Naive thymus-derived CD4-positive, alpha-beta T cell (primary cell): ENCODE measurements at regions of chr6 and their contacts with region 1.

Region 1: GRCh38 chr6:36196880-36197548 is 470 bp downstream of the BRPF3 start:
- DNase-seq: peak; percentile 94 to 100 (median 98)
- ATAC-seq: peak; percentile 96
- H3K4me3 ChIP-seq: peak overlapping the region; percentile 81
- H3K4me3 Mint-ChIP-seq: peak overlapping the region; percentile 88 to 95 (median 92)
- H3K27ac ChIP-seq: peak overlapping the region; percentile 84
- H3K27ac Mint-ChIP-seq: peak overlapping the region; percentile 69 to 96 (median 92)
- H3K4me1 ChIP-seq: peaks cover 33 to 36% of the 10 kb centered on the region in 2 donors
- H3K4me1 Mint-ChIP-seq: peaks cover 19 to 59% (median 47%) of the 10 kb centered on the region in 7 donors
- H3K27me3 ChIP-seq: no peaks in the 10 kb centered on the region
- H3K27me3 Mint-ChIP-seq: peaks cover 0 to 3% (median 0%) of the 10 kb centered on the region in 5 donors

Region 2: GRCh38 chr6:36075656-36076055 is 121.4 kb before region 1 on chr6:
- CTCF ChIA-PET with region 1: no interaction called
- POLR2A ChIA-PET with region 1: no interaction called
- intact Hi-C with region 1: loop called in 1 of 2 experiments (anchors 1 kb)
- DNase-seq: peak in 5 of 9 donors; percentile 8 to 35 (median 22)
- ATAC-seq: peak; percentile 61
- H3K4me3 ChIP-seq: no peak overlapping the region
- H3K4me3 Mint-ChIP-seq: no peak overlapping the region
- H3K27ac ChIP-seq: no peak overlapping the region
- H3K27ac Mint-ChIP-seq: peak overlapping the region in 6 of 9 donors; percentile 6 to 69 (median 47)
- H3K4me1 ChIP-seq: no peaks in the 10 kb centered on the region
- H3K4me1 Mint-ChIP-seq: peaks cover 8 to 40% (median 28%) of the 10 kb centered on the region in 7 donors
- H3K27me3 ChIP-seq: no peaks in the 10 kb centered on the region
- H3K27me3 Mint-ChIP-seq: no peaks in the 10 kb centered on the region

Region 3: GRCh38 chr6:36123257-36124139 is 73.5 kb before region 1 on chr6:
- CTCF ChIA-PET with region 1: interaction called, 9 read pairs
- POLR2A ChIA-PET with region 1: interaction called, 15 read pairs
- intact Hi-C with region 1: loop called (anchors 1 kb)
- DNase-seq: peak; percentile 74 to 96 (median 89)
- ATAC-seq: peak; percentile 83
- H3K4me3 ChIP-seq: peak overlapping the region; percentile 11
- H3K4me3 Mint-ChIP-seq: peak overlapping the region; percentile 36 to 99 (median 60)
- H3K27ac ChIP-seq: peak overlapping the region; percentile 90
- H3K27ac Mint-ChIP-seq: peak overlapping the region; percentile 94 to 100 (median 99)
- H3K4me1 ChIP-seq: peaks cover 64 to 75% of the 10 kb centered on the region in 2 donors
- H3K4me1 Mint-ChIP-seq: peaks cover 63 to 98% (median 87%) of the 10 kb centered on the region in 7 donors
- H3K27me3 ChIP-seq: no peaks in the 10 kb centered on the region
- H3K27me3 Mint-ChIP-seq: no peaks in the 10 kb centered on the region

Region 4: DNA sequence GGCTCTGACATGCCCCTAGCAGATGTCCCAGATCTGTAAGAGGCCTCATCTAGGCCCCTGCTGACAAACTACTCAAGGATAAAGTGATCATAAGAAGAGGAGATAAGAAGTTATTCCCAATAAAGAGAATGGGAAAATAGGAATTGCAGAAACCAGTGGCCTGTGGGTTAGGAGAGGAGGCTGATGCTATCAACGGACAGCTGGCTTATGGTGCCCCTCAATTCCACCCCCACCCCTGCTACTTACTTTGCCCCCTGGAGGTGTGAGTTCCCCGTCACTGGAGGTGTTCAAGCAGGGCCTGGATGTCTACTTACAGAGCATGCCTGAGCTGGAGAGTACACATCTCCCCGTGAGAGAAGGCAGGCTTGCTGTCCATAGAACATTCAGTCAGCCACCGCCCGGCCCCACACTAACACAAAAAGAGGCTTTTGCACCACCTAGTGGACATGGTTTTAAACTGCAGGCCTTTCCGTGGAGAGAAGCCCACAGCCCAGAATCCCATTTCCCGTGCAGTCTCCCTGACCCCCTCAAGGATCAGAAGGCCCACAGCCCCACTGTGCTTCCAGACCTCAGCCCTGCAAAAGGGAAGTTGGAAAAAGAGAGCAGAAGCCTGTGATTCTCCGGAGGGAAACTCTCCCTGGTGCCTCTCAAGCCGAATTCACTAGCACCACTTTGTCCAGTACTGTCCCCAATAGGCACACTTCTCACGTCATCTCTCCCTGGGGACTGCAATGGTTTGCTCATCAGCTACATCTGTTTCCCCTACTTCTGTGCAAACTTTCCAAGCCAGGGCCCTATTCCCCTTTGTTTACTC is 163.4 kb after region 1 on chr6:
- CTCF ChIA-PET with region 1: no interaction called
- POLR2A ChIA-PET with region 1: no interaction called
- intact Hi-C with region 1: loop called in 1 of 2 experiments (anchors 1 kb)
- DNase-seq: peak; percentile 37 to 74 (median 66)
- ATAC-seq: peak; percentile 95
- H3K4me3 ChIP-seq: no peak overlapping the region
- H3K4me3 Mint-ChIP-seq: no peak overlapping the region
- H3K27ac ChIP-seq: no peak overlapping the region
- H3K27ac Mint-ChIP-seq: peak overlapping the region in 2 of 9 donors; percentile 24 to 55
- H3K4me1 ChIP-seq: peaks cover 4 to 6% of the 10 kb centered on the region in 2 donors
- H3K4me1 Mint-ChIP-seq: peaks cover 0 to 30% (median 4%) of the 10 kb centered on the region in 7 donors
- H3K27me3 ChIP-seq: no peaks in the 10 kb centered on the region
- H3K27me3 Mint-ChIP-seq: peaks cover 0 to 15% (median 4%) of the 10 kb centered on the region in 5 donors

Region 5: GRCh38 chr6:36985808-36986703 is 789.0 kb after region 1 on chr6 and contains the start of gene MTCH1:
- CTCF ChIA-PET with region 1: no interaction called
- POLR2A ChIA-PET with region 1: no interaction called
- intact Hi-C with region 1: loop called in 1 of 2 experiments (anchors 2 kb)
- DNase-seq: peak; percentile 85 to 98 (median 92)
- ATAC-seq: peak; percentile 93
- H3K4me3 ChIP-seq: peak within 1 kb of the TSS; percentile 98
- H3K4me3 Mint-ChIP-seq: peak within 1 kb of the TSS in 6 of 10 donors; percentile 98 to 100 (median 100)
- H3K27ac ChIP-seq: peak within 1 kb of the TSS; percentile 96
- H3K27ac Mint-ChIP-seq: peak within 1 kb of the TSS in 7 of 9 donors; percentile 98 to 99 (median 99)
- H3K4me1 ChIP-seq: peaks cover 22 to 27% of the 10 kb centered on the region in 2 donors
- H3K4me1 Mint-ChIP-seq: peaks cover 12 to 26% (median 18%) of the 10 kb centered on the region in 7 donors
- H3K27me3 ChIP-seq: no peaks in the 10 kb centered on the region
- H3K27me3 Mint-ChIP-seq: peaks cover 0 to 17% (median 0%) of the 10 kb centered on the region in 5 donors
- total RNA-seq, gene MTCH1: 123 to 198 (median 130) TPM